Caco-2 (cell line): ENCODE measurements at regions of chr1 and their contacts with region 1.

Region 1: DNA sequence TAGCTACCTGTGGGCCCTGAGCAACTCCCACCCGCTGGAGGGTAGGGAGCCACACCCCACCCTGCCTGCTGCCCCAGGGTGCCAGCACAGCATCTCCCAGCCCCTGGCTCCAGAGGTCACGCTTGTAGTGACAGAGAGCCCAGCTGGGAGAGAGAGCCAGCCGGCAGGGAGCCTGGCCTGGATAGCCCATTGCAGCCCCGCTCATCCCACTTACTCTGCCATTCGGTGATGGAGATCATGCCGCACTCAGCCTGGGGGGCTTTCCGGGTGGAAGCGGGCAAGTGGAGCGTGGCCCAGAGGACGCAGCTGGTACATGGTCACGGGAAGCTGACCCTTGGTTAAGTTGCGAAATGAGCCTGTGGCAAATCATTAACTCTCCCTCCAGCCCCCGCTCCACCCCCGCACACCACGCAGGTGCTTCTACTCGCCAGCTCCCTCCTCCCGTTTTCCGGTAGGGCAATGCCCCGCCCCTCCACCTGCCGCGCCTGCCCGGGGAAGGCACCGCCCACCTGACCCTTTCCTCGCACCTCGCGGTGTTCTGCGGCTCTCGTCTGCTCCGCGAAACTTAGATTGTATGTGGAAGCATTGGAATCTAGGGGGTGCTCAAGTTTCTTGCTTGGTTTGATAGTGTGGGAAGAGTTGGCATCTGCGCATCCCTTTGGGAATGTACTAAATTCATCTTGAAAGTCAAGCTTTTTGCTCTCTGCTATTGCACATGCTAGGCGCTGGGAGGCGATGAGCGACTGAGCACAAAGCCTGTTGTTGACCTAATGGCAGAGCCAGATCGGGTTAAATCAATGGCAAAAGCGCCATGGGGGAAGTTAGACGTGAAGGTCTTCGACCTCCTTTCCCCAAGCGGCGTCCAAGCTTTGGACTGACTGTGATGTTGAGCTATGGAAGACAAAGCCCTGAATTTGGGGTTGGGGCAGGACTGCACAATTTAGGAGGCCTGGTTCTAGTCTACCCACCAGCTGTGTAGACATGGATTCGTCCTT is at the start of gene GOLT1A:
- DNase-seq: peak; percentile 97
- H3K4me3 ChIP-seq: peak within 1 kb of the TSS; percentile 79
- H3K4me3 Mint-ChIP-seq: no peak within 1 kb of the TSS
- H3K27ac Mint-ChIP-seq: no peak within 1 kb of the TSS
- H3K4me1 ChIP-seq: peaks cover 12% of the 10 kb centered on the region; the same call in 1 of the 2 replicates
- H3K4me1 Mint-ChIP-seq: no peaks in the 10 kb centered on the region
- H3K27me3 ChIP-seq: no peaks in the 10 kb centered on the region
- H3K27me3 Mint-ChIP-seq: no peaks in the 10 kb centered on the region
- CTCF ChIP-seq: peak; percentile 65 to 73
- total RNA-seq, gene GOLT1A: 20.4 and 25.9 TPM in 2 replicates

Region 2: DNA sequence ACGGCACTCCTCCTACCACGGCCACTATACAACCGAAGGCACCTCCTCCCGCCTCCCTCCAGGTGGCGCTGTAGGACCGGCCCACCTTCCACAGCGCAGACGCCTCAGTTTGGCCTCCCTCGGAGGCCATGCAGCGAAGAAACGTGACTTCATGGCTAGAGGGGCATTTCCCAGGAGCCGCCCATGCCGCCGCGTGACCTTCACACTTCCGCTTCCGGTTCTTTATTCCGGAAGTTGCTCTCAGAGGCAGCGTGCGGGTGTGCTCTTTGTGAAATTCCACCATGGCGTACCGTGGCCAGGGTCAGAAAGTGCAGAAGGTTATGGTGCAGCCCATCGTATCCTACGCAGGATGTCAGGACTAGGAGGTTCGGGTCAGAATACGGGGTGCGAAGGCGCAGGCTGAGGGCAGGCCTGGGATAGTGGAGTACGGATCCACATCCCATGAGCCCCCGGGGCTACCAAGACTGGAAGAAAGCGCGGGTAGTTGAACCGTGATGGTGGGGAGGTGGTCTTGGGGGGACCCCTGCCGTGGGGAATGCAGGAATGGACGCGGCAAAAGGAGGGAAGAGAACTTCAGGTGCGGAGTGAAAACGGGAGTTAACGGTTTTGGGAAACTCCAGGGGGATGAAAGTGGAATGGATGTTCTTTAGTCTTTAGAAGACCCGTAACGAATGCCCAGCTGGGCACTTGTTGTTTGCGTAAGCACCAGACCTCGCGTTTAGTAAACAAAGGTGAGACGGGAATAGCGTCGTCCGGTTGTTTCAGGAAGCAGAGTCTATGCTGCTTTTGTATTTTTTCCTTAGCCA is 352.4 kb before region 1 on chr1 and contains the start of gene SNRPE:
- CTCF ChIA-PET with region 1: interaction called, 5 read pairs
- POLR2A ChIA-PET with region 1: no interaction called
- intact Hi-C with region 1: loop called (anchors 5 kb)
- DNase-seq: peak; percentile 97
- H3K4me3 ChIP-seq: peak within 1 kb of the TSS; percentile 89
- H3K4me3 Mint-ChIP-seq: peak within 1 kb of the TSS; percentile 93
- H3K27ac Mint-ChIP-seq: peak within 1 kb of the TSS; percentile 98
- H3K4me1 ChIP-seq: peaks cover 20% of the 10 kb centered on the region
- H3K4me1 Mint-ChIP-seq: peaks cover 6% of the 10 kb centered on the region
- H3K27me3 ChIP-seq: no peaks in the 10 kb centered on the region
- H3K27me3 Mint-ChIP-seq: no peaks in the 10 kb centered on the region
- CTCF ChIP-seq: peak; percentile 89 to 96
- total RNA-seq, gene SNRPE: 236 and 264 TPM in 2 replicates

Region 3: DNA sequence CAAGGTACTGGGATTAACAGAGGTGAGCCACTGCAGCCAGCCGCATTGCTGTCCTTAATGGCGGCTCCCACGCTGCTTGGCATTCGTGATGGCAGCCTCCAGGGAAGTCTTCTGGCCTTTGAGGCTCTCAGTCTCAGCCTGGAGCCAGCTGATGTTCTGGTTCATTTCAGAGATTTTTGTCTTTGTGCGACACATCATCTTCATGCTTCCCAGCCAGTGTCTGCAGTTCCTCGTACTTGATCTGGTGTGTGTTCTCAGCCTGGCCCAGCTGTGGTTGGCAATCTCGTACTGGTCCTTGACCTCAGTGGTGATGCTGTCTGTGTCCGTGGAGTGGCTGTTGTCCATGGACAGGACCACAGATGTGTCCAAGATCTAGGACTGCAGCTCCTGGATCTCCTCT is 340.9 kb before region 1 on chr1:
- CTCF ChIA-PET with region 1: no interaction called
- POLR2A ChIA-PET with region 1: no interaction called
- intact Hi-C with region 1: no loop called
- DNase-seq: no peak
- H3K4me3 ChIP-seq: no peak overlapping the region
- H3K4me3 Mint-ChIP-seq: no peak overlapping the region
- H3K27ac Mint-ChIP-seq: no peak overlapping the region
- H3K4me1 ChIP-seq: no peaks in the 10 kb centered on the region
- H3K4me1 Mint-ChIP-seq: peaks cover 7% of the 10 kb centered on the region
- H3K27me3 ChIP-seq: no peaks in the 10 kb centered on the region
- H3K27me3 Mint-ChIP-seq: no peaks in the 10 kb centered on the region
- CTCF ChIP-seq: no peak

Region 4: DNA sequence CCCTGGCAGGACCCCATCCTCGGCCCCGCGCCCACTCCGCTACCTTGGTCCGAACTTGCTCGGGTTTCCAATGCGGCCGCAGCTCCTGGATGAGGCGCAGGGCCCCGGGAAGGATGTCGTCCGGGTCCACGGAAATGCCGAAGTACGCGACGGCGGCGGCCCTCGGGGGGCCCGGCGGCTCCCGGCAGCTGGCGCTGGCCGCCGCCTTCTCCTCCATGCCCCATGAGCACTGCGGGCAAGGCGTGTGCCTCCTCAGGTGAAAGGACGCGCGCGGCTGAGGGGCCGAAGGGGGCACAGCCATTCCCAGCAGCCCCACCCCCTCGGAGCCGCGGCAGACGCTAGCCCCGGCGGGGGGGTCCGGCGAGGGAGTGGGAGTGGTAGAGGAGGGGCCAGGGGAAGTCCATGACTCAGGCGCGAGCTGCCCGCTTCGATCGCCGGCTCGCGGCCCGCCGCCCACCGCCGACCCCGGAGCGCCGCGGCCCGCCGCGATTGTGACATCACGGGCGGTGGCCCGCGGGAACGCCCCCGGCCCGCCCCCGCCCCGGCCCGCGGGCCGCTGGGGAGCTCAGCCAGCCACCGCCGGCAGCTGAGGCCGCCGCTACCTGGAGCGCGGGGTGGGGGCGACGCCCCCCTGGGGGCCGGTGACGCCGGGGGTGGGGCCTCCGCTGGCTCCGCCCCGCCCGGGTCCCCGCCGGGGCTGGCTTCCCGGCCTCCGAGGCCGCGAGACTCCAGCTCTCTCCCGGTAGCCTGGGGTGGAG is 62.2 kb before region 1 on chr1 and contains the start of gene ETNK2:
- CTCF ChIA-PET with region 1: interaction called, 12 read pairs
- POLR2A ChIA-PET with region 1: interaction called, 5 read pairs
- intact Hi-C with region 1: no loop called
- DNase-seq: peak; percentile 76 to 84
- H3K4me3 ChIP-seq: peak within 1 kb of the TSS; percentile 59
- H3K4me3 Mint-ChIP-seq: peak within 1 kb of the TSS; percentile 71
- H3K27ac Mint-ChIP-seq: no peak within 1 kb of the TSS
- H3K4me1 ChIP-seq: peaks cover 6% of the 10 kb centered on the region
- H3K4me1 Mint-ChIP-seq: no peaks in the 10 kb centered on the region
- H3K27me3 ChIP-seq: no peaks in the 10 kb centered on the region
- H3K27me3 Mint-ChIP-seq: no peaks in the 10 kb centered on the region
- CTCF ChIP-seq: no peak
- total RNA-seq, gene ETNK2: 16.2 and 21.9 TPM in 2 replicates

Region 5: GRCh38 chr1:204198151-204198994 is 15.6 kb before region 1 on chr1:
- CTCF ChIA-PET with region 1: interaction called, 16 read pairs
- POLR2A ChIA-PET with region 1: no interaction called
- intact Hi-C with region 1: no loop called
- DNase-seq: peak; percentile 74 to 80
- H3K4me3 ChIP-seq: no peak overlapping the region
- H3K4me3 Mint-ChIP-seq: no peak overlapping the region
- H3K27ac Mint-ChIP-seq: peak overlapping the region; percentile 68
- H3K4me1 ChIP-seq: peaks cover 23% of the 10 kb centered on the region
- H3K4me1 Mint-ChIP-seq: peaks cover 17% of the 10 kb centered on the region
- H3K27me3 ChIP-seq: no peaks in the 10 kb centered on the region
- H3K27me3 Mint-ChIP-seq: no peaks in the 10 kb centered on the region
- CTCF ChIP-seq: peak in 1 of 2 experiments; percentile 20

Region 6: GRCh38 chr1:204257954-204258752 is 44.2 kb after region 1 on chr1:
- CTCF ChIA-PET with region 1: interaction called, 27 read pairs
- POLR2A ChIA-PET with region 1: no interaction called
- intact Hi-C with region 1: loop called (anchors 1 kb)
- DNase-seq: peak; percentile 76 to 84
- H3K4me3 ChIP-seq: no peak overlapping the region
- H3K4me3 Mint-ChIP-seq: no peak overlapping the region
- H3K27ac Mint-ChIP-seq: no peak overlapping the region
- H3K4me1 ChIP-seq: peaks cover 8% of the 10 kb centered on the region; the same call in 1 of the 2 replicates
- H3K4me1 Mint-ChIP-seq: no peaks in the 10 kb centered on the region
- H3K27me3 ChIP-seq: no peaks in the 10 kb centered on the region
- H3K27me3 Mint-ChIP-seq: no peaks in the 10 kb centered on the region
- CTCF ChIP-seq: peak; percentile 86 to 92

Region 7: DNA sequence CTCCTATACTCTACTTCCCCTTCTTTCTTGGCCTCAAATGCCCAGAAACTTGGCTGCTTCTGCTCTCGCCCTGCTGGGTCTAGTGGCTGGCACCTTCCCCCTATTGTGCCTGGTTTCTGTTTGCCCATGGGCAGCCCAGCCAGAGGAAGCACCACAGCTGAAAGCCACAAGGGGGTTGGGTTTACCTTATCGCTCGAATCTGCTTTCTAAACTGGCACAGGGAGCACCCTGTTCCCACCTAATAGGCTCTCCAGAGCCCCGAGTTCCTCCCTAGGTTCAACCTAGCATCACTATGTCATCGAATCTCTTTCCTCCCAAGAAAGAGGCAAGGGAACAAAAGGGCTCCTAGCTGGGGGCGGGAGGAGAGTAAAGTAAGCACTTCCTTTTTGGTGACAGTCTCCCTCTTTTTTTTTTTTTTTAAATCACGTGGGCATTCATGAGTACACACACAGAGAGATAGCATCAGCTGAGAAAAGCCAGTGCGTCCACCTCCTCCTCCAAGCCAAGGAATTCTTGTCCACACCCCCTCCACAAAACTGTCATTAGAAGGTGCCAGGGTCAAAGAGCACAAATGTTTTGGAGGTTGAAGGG is 73.0 kb after region 1 on chr1:
- CTCF ChIA-PET with region 1: interaction called, 4 read pairs
- POLR2A ChIA-PET with region 1: no interaction called
- intact Hi-C with region 1: loop called (anchors 2 kb)
- DNase-seq: peak; percentile 60 to 65
- H3K4me3 ChIP-seq: peak overlapping the region; percentile 39
- H3K4me3 Mint-ChIP-seq: peak overlapping the region; percentile 70
- H3K27ac Mint-ChIP-seq: peak overlapping the region; percentile 68
- H3K4me1 ChIP-seq: peaks cover 43% of the 10 kb centered on the region
- H3K4me1 Mint-ChIP-seq: peaks cover 51% of the 10 kb centered on the region
- H3K27me3 ChIP-seq: no peaks in the 10 kb centered on the region
- H3K27me3 Mint-ChIP-seq: no peaks in the 10 kb centered on the region
- CTCF ChIP-seq: no peak

Region 8: GRCh38 chr1:204398217-204399081 is 184.5 kb after region 1 on chr1:
- CTCF ChIA-PET with region 1: interaction called, 44 read pairs
- POLR2A ChIA-PET with region 1: no interaction called
- intact Hi-C with region 1: loop called (anchors 1 kb)
- DNase-seq: peak; percentile 88 to 91
- H3K4me3 ChIP-seq: no peak overlapping the region
- H3K4me3 Mint-ChIP-seq: no peak overlapping the region
- H3K27ac Mint-ChIP-seq: no peak overlapping the region
- H3K4me1 ChIP-seq: no peaks in the 10 kb centered on the region
- H3K4me1 Mint-ChIP-seq: peaks cover 10% of the 10 kb centered on the region
- H3K27me3 ChIP-seq: no peaks in the 10 kb centered on the region
- H3K27me3 Mint-ChIP-seq: no peaks in the 10 kb centered on the region
- CTCF ChIP-seq: peak; percentile 82 to 90